Gastrocnemius medialis (tissue), 4 donors: ENCODE measurements at regions of chr14 and their contacts with region 1.

Region 1: DNA sequence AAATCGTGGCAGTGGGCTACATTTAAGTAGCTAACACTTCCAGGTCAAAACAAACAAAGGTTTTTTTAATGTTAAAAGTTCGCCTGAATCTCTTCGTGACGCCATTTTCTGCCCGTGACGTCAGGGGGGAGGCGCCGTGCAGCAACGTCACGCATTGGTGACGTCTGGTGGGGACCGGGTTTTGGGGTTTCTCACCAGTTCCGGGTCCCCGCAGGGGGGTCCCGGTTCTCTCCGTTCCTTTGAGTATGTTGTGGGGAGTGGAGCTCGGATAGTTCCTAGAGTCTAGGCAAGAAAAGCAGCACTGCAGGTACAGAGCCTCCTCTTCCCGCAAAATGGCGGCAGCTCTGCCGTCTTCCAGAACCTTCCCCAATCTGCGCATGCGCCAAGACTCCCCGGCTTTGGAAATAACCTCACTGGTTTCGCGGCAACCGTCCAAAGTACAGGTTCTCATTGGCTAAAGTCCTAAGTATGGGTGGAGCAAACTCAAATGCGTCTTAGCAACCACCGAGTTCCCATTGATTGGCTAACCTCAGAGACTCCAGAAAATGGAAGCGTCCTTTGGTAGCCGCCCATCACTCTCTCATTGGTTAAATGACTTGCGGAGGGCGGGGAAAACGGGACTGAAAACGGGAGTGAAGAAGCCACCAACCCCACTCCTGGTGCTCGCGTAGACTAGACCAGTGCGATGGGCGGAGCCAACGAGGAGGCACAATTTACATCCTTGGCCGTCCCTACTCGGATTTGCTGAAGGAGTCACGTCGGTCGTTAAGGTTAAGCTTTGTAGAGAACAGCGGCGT is at the start of gene RBM23:
- DNase-seq: peak; percentile 99 to 100
- ATAC-seq: peak; percentile 99
- H3K4me3 ChIP-seq: peak within 1 kb of the TSS; percentile 81 to 99 (median 92)
- H3K27ac ChIP-seq: peak within 1 kb of the TSS; percentile 95 to 99 (median 98)
- H3K4me1 ChIP-seq: peaks cover 6 to 26% of the 10 kb centered on the region in 2 donors
- H3K27me3 ChIP-seq: no peaks in the 10 kb centered on the region
- CTCF ChIP-seq: no peak
- POLR2A ChIP-seq: peak; percentile 87 to 88
- total RNA-seq, gene RBM23: 37.7 to 83.3 (median 62.1) TPM

Region 2: DNA sequence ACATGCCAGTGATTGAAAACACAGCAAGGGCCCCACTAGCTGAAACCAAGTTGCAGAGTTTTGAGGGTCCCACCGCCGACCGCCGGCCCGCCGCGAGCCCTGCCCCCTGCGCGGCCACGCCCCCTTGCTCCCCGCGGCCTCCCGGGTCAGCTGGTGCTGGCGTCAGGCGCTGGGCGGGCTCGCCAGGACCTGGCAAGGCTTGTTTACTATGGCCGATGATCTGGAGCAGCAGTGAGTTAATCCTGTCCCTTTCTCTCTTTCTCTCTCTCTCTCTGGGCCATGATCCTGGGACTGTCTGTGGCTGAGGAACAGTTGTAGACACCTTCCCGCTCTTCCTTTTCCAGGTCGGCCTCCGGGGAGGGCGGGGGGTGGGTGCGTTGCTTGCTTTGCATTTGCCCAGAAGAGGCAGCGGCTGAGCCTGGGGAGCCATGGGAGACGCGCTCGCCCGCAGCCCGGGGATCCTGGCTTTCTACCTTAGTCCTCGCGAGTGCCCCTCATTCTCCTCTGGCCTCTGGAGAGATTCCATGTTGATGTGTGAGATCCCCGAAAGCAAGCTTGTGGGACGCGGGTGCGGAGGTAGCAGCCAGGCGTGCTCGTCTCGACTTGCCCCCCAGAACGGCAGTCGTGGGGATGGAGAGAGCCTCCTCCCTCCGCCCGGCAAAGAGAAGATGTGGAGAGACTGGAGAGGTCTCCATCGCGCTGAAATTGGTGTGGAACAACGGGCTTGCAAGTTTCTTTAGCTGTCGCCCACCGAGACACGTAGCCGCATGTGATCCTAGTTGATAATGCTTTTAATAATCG is 320.7 kb before region 1 on chr14 and contains the start of gene ABHD4:
- in situ Hi-C with region 1: no loop called
- intact Hi-C with region 1: loop called (anchors 5 kb)
- DNase-seq: peak; percentile 74 to 83
- ATAC-seq: peak; percentile 89 to 92
- H3K4me3 ChIP-seq: peak within 1 kb of the TSS; percentile 77 to 91 (median 85)
- H3K27ac ChIP-seq: peak within 1 kb of the TSS; percentile 89 to 98 (median 94)
- H3K4me1 ChIP-seq: peaks cover 21 to 30% of the 10 kb centered on the region in 2 donors
- H3K27me3 ChIP-seq: no peaks in the 10 kb centered on the region
- CTCF ChIP-seq: no peak
- POLR2A ChIP-seq: peak; percentile 80 to 89
- total RNA-seq, gene ABHD4: 17.1 to 38.7 (median 27.6) TPM

Region 3: DNA sequence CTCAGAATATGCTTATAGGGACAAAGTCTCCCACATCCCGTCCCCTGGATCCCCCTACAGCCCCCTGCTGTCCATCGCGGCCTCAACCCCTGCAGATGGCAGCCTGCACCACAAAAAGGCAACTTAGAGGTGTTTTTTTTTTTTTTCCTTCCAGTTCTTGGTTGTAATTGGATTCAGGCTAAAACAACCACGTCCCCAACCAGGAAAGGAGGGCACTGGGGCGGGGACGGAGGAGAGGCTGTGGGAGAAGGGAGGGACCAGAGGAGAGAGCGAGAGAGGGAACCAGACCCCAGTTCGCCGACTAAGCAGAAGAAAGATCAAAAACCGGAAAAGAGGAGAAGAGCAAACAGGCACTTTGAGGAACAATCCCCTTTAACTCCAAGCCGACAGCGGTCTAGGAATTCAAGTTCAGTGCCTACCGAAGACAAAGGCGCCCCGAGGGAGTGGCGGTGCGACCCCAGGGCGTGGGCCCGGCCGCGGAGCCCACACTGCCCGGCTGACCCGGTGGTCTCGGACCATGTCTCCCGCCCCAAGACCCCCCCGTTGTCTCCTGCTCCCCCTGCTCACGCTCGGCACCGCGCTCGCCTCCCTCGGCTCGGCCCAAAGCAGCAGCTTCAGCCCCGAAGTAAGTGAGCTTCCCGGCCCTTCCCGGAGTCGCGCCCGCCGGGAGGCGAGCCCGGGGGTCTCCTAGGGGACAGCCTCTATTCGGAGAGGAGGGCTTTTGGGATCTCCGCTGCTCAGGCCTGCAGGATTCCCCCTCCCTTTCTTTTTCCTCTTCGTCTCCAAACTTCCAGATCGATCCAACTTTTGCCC is 82.5 kb before region 1 on chr14 and contains the start of gene MMP14:
- in situ Hi-C with region 1: no loop called
- intact Hi-C with region 1: loop called (anchors 5 kb)
- DNase-seq: peak; percentile 67 to 74
- ATAC-seq: peak; percentile 35 to 43
- H3K4me3 ChIP-seq: peak within 1 kb of the TSS; percentile 71 to 78 (median 72)
- H3K27ac ChIP-seq: peak within 1 kb of the TSS; percentile 75 to 84 (median 80)
- H3K4me1 ChIP-seq: peaks cover 0 to 11% of the 10 kb centered on the region in 2 donors
- H3K27me3 ChIP-seq: peaks cover 9 to 12% (median 9%) of the 10 kb centered on the region in 3 donors
- CTCF ChIP-seq: peak in 1 of 5 experiments; percentile 19
- POLR2A ChIP-seq: peak in 1 of 2 donors; percentile 63
- total RNA-seq, gene MMP14: 14.9 to 29.7 (median 20.8) TPM